Activated CD4-positive, alpha-beta T cell treated with anti-CD3 and anti-CD28 coated beads, Interleukin-2, amount 10 ng/mL, durations not matched to agents 24 days and 14 days (primary cell): ENCODE measurements at regions of chr14 and their contacts with region 1.

Region 1: GRCh38 chr14:75497191-75497590 is 25.1 kb upstream of the BATF start:
- DNase-seq: peak; percentile 84
- H3K4me3 Mint-ChIP-seq: peak overlapping the region; percentile 76
- H3K27ac Mint-ChIP-seq: peak overlapping the region; percentile 90
- H3K4me1 Mint-ChIP-seq: peaks cover 48% of the 10 kb centered on the region
- H3K27me3 Mint-ChIP-seq: no peaks in the 10 kb centered on the region

Region 2: GRCh38 chr14:75427482-75428229 is 69.5 kb before region 1 on chr14 and contains the start of gene JDP2:
- intact Hi-C with region 1: loop called (anchors 5 kb)
- DNase-seq: peak; percentile 82
- H3K4me3 Mint-ChIP-seq: peak within 1 kb of the TSS; percentile 76
- H3K27ac Mint-ChIP-seq: peak within 1 kb of the TSS; percentile 72
- H3K4me1 Mint-ChIP-seq: peaks cover 16% of the 10 kb centered on the region
- H3K27me3 Mint-ChIP-seq: peaks cover 24% of the 10 kb centered on the region
- total RNA-seq, gene JDP2: 1.1 and 1.4 TPM in 2 replicates

Region 3: DNA sequence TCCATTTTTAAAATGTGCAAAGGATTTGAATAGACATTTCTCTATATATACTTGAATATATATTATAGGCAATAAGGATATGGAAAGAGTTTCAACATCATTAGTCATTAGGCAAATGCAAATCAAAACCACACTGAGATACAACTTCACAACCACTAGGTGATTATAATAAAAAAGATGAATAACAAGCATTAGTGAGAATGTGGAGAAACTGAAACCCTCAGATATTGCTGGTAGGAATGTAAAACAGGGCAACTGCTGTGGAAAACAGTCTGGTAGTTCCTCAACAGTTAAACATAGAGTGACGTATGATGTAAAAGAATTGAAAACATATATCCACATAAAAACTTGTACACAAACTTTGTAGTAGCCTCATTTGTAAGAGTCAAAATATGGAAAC is 13.4 kb after region 1 on chr14:
- intact Hi-C with region 1: loop called (anchors 1 kb)
- DNase-seq: no peak
- H3K4me3 Mint-ChIP-seq: no peak overlapping the region
- H3K27ac Mint-ChIP-seq: peak overlapping the region; percentile 73
- H3K4me1 Mint-ChIP-seq: peaks cover 29% of the 10 kb centered on the region
- H3K27me3 Mint-ChIP-seq: no peaks in the 10 kb centered on the region

Region 4: DNA sequence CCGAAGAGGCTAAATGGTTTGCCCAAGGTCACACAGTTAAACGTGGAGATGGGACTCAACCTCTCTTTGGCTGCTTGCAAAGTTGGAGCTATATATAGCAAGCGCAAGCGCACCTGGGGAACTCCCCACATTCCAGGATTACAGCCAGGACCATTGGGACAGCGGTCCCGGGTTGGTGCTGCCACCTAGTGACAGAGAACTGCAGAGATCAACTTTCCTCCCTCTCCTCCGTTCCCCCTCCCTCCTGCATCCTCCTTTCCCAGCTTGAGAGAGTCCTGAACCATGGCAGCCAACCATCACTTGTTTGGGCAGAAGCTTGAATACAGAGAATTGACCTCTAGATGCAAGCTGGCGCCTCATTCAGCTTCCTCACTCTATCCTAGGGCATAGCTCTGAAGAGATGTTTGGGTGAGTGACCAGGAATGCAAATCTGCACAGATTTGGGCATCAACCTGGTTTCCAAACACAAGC is 63.8 kb after region 1 on chr14:
- intact Hi-C with region 1: loop called (anchors 2 kb)
- DNase-seq: peak; percentile 84
- H3K4me3 Mint-ChIP-seq: peak overlapping the region; percentile 63
- H3K27ac Mint-ChIP-seq: peak overlapping the region; percentile 98
- H3K4me1 Mint-ChIP-seq: peaks cover 61% of the 10 kb centered on the region
- H3K27me3 Mint-ChIP-seq: no peaks in the 10 kb centered on the region

Region 5: DNA sequence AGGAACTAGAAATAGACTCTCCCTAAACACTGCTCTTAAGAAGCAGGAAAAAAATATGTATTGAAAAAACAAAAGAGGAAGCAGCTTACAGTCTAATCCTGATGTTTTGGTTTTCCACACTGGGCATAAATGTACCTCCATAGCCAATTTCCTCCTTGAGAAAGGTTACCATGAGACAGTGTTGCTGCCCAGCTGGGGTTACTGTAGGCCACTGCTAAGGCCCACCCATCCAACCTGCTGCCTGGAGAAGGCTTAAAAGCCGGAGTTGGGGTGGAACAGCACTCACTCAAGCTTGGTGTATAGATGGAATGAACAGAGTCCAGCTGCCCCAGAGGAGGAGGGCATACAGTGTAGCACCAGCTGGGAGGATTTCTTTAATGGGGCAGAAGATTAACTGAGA is 122.4 kb after region 1 on chr14:
- intact Hi-C with region 1: no loop called
- DNase-seq: no peak
- H3K4me3 Mint-ChIP-seq: no peak overlapping the region
- H3K27ac Mint-ChIP-seq: no peak overlapping the region
- H3K4me1 Mint-ChIP-seq: no peaks in the 10 kb centered on the region
- H3K27me3 Mint-ChIP-seq: no peaks in the 10 kb centered on the region

Region 6: GRCh38 chr14:75748336-75748735 is 251.1 kb after region 1 on chr14:
- intact Hi-C with region 1: no loop called
- DNase-seq: no peak
- H3K4me3 Mint-ChIP-seq: no peak overlapping the region
- H3K27ac Mint-ChIP-seq: no peak overlapping the region
- H3K4me1 Mint-ChIP-seq: no peaks in the 10 kb centered on the region
- H3K27me3 Mint-ChIP-seq: no peaks in the 10 kb centered on the region